ENCODE measurements at regions of chr10 and their contacts with region 1.

Region 1: GRCh38 chr10:75111367-75111906 is at the start of gene SAMD8:
- DNase-seq: peak; percentile 98 to 99 (median 99)
- ATAC-seq: peak; percentile 91 to 92
- H3K4me3 ChIP-seq: peak within 1 kb of the TSS; percentile 86
- H3K27ac ChIP-seq: peak within 1 kb of the TSS; percentile 97
- H3K4me1 ChIP-seq: peaks cover 3% of the 10 kb centered on the region
- H3K27me3 ChIP-seq: no peaks in the 10 kb centered on the region
- total RNA-seq, gene SAMD8: 21.4 to 26.7 (median 24.5) TPM

Region 2: GRCh38 chr10:75187961-75188426 is 76.6 kb after region 1 on chr10:
- intact Hi-C with region 1: loop called in 1 of 4 experiments (anchors 10 kb)
- DNase-seq: peak in 1 of 3 donors; percentile 38
- ATAC-seq: no peak
- H3K4me3 ChIP-seq: no peak overlapping the region
- H3K27ac ChIP-seq: no peak overlapping the region
- H3K4me1 ChIP-seq: no peaks in the 10 kb centered on the region
- H3K27me3 ChIP-seq: no peaks in the 10 kb centered on the region

Measured in right cardiac atrium (tissue), 5 donors.